Activated CD4-positive, alpha-beta memory T cell treated with anti-CD3 and anti-CD28 coated beads, Interleukin-2, amount 10 ng/mL, durations not matched to agents 7 days and 5 days (primary cell): ENCODE measurements at regions of chr19 and their contacts with region 1.

Region 1: DNA sequence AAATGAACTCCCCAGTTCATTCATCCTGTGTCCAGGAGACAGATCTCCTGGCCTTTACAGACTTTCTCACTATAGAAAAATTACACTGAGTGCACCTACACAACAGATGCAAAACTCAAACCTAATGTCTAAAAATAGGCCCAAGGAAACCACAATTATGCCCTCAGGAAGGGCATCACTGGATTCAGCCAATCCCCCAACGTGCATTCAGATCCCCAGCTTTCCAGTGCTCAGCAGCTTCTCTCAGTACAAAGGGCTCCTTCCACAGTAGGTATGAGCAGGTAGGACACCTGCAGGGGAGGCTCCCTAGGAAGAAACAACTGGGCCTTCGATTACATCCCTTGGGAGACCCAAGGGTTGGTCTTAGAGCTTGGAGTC is 2.1 kb downstream of the ZNF709 start:
- DNase-seq: no peak
- H3K4me3 Mint-ChIP-seq: peak overlapping the region; percentile 16
- H3K27ac Mint-ChIP-seq: no peak overlapping the region
- H3K4me1 Mint-ChIP-seq: peaks cover 29% of the 10 kb centered on the region
- H3K27me3 Mint-ChIP-seq: no peaks in the 10 kb centered on the region

Region 2: GRCh38 chr19:12495002-12495802 is 12.7 kb after region 1 on chr19:
- CTCF ChIA-PET with region 1: no interaction called
- POLR2A ChIA-PET with region 1: interaction called, 15 read pairs
- DNase-seq: peak; percentile 93
- H3K4me3 Mint-ChIP-seq: peak overlapping the region; percentile 81
- H3K27ac Mint-ChIP-seq: peak overlapping the region; percentile 66
- H3K4me1 Mint-ChIP-seq: peaks cover 16% of the 10 kb centered on the region
- H3K27me3 Mint-ChIP-seq: no peaks in the 10 kb centered on the region

Region 3: DNA sequence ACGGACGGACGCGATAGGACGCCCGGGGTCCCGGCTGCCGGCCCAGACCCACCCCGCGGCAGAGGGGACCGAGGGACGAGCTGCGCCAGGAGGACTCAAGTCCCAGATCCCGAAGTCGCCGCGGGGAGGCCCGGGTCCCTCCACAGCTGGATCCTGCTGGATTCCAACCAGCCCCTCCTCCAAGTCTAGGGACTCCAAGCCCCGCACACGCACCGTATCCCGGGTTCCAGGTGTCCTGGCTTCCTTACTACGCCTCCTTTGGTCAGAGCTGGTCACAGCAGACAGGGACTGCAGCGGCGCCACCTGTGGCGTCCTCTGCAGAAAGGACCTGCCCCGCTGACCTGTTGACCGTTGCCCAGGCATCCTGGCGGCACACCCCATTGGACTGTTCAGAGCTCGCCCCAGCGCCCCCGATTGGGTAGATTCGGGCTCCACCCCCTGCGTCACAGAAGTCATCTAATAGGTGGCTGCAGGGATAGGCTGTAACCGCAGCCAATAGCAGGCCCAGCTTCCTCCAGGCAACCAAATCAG is 31.1 kb after region 1 on chr19:
- CTCF ChIA-PET with region 1: no interaction called
- POLR2A ChIA-PET with region 1: no interaction called
- DNase-seq: no peak
- H3K4me3 Mint-ChIP-seq: no peak overlapping the region
- H3K27ac Mint-ChIP-seq: no peak overlapping the region
- H3K4me1 Mint-ChIP-seq: no peaks in the 10 kb centered on the region
- H3K27me3 Mint-ChIP-seq: no peaks in the 10 kb centered on the region

Region 4: GRCh38 chr19:12639901-12640613 is 157.6 kb after region 1 on chr19:
- CTCF ChIA-PET with region 1: no interaction called
- POLR2A ChIA-PET with region 1: no interaction called
- DNase-seq: peak; percentile 87
- H3K4me3 Mint-ChIP-seq: peak overlapping the region; percentile 58
- H3K27ac Mint-ChIP-seq: peak overlapping the region; percentile 33
- H3K4me1 Mint-ChIP-seq: peaks cover 15% of the 10 kb centered on the region
- H3K27me3 Mint-ChIP-seq: no peaks in the 10 kb centered on the region